ENCODE measurements at regions of chr17 and their contacts with region 1.

Region 1: GRCh38 chr17:50361561-50362480 is 11.2 kb downstream of the MRPL27 start:
- DNase-seq: peak; percentile 49
- H3K4me3 ChIP-seq: no peak overlapping the region
- H3K27ac ChIP-seq: no peak overlapping the region
- H3K27me3 ChIP-seq: no peaks in the 10 kb centered on the region
- CTCF ChIP-seq: peak; percentile 80

Region 2: GRCh38 chr17:50151041-50151936 is 210.5 kb before region 1 on chr17:
- CTCF ChIA-PET with region 1: interaction called, 11 read pairs
- POLR2A ChIA-PET with region 1: no interaction called
- DNase-seq: peak; percentile 69
- H3K4me3 ChIP-seq: peak overlapping the region; percentile 79
- H3K27ac ChIP-seq: peak overlapping the region; percentile 67
- H3K27me3 ChIP-seq: no peaks in the 10 kb centered on the region
- CTCF ChIP-seq: peak; percentile 69

Region 3: GRCh38 chr17:50177983-50178834 is 183.6 kb before region 1 on chr17:
- CTCF ChIA-PET with region 1: no interaction called
- POLR2A ChIA-PET with region 1: interaction called, 13 read pairs
- DNase-seq: peak; percentile 92
- H3K4me3 ChIP-seq: 0 out of 2 replicates have a peak overlapping the region, but pooled peaks have one; percentile 4
- H3K27ac ChIP-seq: peak overlapping the region; percentile 98
- H3K27me3 ChIP-seq: no peaks in the 10 kb centered on the region
- CTCF ChIP-seq: peak; percentile 59

Region 4: GRCh38 chr17:50255766-50256635 is 105.8 kb before region 1 on chr17:
- CTCF ChIA-PET with region 1: no interaction called
- POLR2A ChIA-PET with region 1: no interaction called
- DNase-seq: no peak
- H3K4me3 ChIP-seq: no peak overlapping the region
- H3K27ac ChIP-seq: no peak overlapping the region
- H3K27me3 ChIP-seq: no peaks in the 10 kb centered on the region
- CTCF ChIP-seq: no peak

Region 5: GRCh38 chr17:50312308-50312707 is 49.5 kb before region 1 on chr17:
- CTCF ChIA-PET with region 1: interaction called, 16 read pairs
- POLR2A ChIA-PET with region 1: no interaction called
- DNase-seq: no peak
- H3K4me3 ChIP-seq: no peak overlapping the region
- H3K27ac ChIP-seq: no peak overlapping the region
- H3K27me3 ChIP-seq: peaks cover 4% of the 10 kb centered on the region
- CTCF ChIP-seq: no peak

Region 6: GRCh38 chr17:50372758-50373556 is 11.1 kb after region 1 on chr17 and contains the starts of genes EME1 and MRPL27:
- CTCF ChIA-PET with region 1: interaction called, 47 read pairs
- POLR2A ChIA-PET with region 1: interaction called, 3 read pairs
- DNase-seq: peak; percentile 44
- H3K4me3 ChIP-seq: peak within 1 kb of the TSS; percentile 66
- H3K27ac ChIP-seq: peak within 1 kb of the TSS; percentile 76
- H3K27me3 ChIP-seq: no peaks in the 10 kb centered on the region
- CTCF ChIP-seq: no peak
- polyA plus RNA-seq, gene EME1: 2.2 and 2.5 TPM in 2 replicates
- polyA plus RNA-seq, gene MRPL27: 106 and 116 TPM in 2 replicates

Region 7: DNA sequence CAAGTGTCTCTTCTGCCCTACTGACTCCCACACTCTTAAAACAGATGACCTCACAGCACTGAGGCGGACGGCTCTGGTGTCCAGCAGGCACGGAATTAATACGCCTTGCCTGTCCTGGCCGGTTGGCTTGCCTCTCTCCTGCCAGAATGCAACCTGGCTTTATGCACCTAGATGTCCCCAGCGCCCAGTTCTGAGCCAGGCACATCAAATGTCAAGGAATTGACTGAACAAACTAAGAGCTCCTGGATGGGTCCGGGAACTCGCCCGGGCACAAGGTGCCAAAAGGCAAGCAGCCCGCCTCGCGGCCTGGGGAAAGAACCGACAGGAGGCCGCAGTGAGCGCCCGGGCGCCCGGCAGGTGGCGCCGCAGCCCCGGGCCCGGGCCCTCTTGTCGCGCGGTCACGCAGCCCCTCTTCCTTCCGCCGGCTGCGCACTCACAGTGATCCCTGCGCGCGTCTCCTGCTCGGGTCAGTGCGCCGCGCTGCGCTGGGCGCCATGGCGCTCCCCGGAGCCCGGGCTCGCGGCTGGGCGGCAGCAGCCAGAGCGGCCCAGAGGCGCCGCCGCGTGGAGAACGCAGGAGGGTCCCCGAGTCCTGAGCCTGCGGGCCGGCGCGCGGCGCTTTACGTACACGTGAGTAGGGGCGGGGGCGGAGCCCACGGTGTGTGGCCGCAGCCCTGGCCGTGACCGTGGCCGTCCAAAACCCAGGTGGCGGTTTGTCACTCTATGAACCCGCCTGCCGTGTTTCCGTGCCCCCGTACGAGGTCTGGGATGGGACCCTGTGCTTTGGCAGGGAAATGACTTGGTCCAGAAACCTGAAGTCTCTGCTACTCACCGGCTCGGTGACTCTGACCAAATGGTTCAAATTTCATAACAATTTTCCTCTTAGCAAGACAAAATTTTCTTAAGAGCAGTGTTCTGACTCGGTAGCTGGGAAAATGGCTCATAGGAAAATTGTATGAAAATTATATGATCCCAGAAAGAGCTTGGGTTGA is 116.9 kb after region 1 on chr17 and contains the start of gene RSAD1:
- CTCF ChIA-PET with region 1: interaction called, 24 read pairs
- POLR2A ChIA-PET with region 1: no interaction called
- DNase-seq: peak; percentile 48
- H3K4me3 ChIP-seq: peak within 1 kb of the TSS; percentile 88
- H3K27ac ChIP-seq: peak within 1 kb of the TSS; percentile 73
- H3K27me3 ChIP-seq: no peaks in the 10 kb centered on the region
- CTCF ChIP-seq: peak; percentile 66
- polyA plus RNA-seq, gene RSAD1: 15.5 and 17.5 TPM in 2 replicates